Transverse colon (tissue), 4 donors: ENCODE measurements at regions of chr2 and their contacts with region 1.

Region 1: GRCh38 chr2:78766459-78766858 is 259.0 kb upstream of the REG3G start:
- DNase-seq: no peak
- H3K4me3 ChIP-seq: no peak overlapping the region
- H3K27ac ChIP-seq: no peak overlapping the region
- H3K4me1 ChIP-seq: no peaks in the 10 kb centered on the region
- H3K27me3 ChIP-seq: no peaks in the 10 kb centered on the region
- CTCF ChIP-seq: no peak
- EP300 ChIP-seq: no peak
- POLR2A ChIP-seq: no peak

Region 2: GRCh38 chr2:78686625-78687153 is 79.8 kb before region 1 on chr2:
- in situ Hi-C with region 1: no loop called
- intact Hi-C with region 1: no loop called
- DNase-seq: no peak
- H3K4me3 ChIP-seq: no peak overlapping the region
- H3K27ac ChIP-seq: no peak overlapping the region
- H3K4me1 ChIP-seq: no peaks in the 10 kb centered on the region
- H3K27me3 ChIP-seq: no peaks in the 10 kb centered on the region
- CTCF ChIP-seq: no peak
- EP300 ChIP-seq: no peak
- POLR2A ChIP-seq: no peak

Region 3: GRCh38 chr2:78780864-78781583 is 14.6 kb after region 1 on chr2:
- in situ Hi-C with region 1: no loop called
- intact Hi-C with region 1: loop called (anchors 1 kb)
- DNase-seq: no peak
- H3K4me3 ChIP-seq: no peak overlapping the region
- H3K27ac ChIP-seq: peak overlapping the region; percentile 35 to 77 (median 62)
- H3K4me1 ChIP-seq: peaks cover 0 to 4% (median under 1%) of the 10 kb centered on the region in 4 donors
- H3K27me3 ChIP-seq: no peaks in the 10 kb centered on the region
- CTCF ChIP-seq: no peak
- EP300 ChIP-seq: no peak
- POLR2A ChIP-seq: no peak

Region 4: GRCh38 chr2:78908973-78909372 is 142.5 kb after region 1 on chr2:
- in situ Hi-C with region 1: no loop called
- intact Hi-C with region 1: no loop called
- DNase-seq: no peak
- H3K4me3 ChIP-seq: no peak overlapping the region
- H3K27ac ChIP-seq: no peak overlapping the region
- H3K4me1 ChIP-seq: no peaks in the 10 kb centered on the region
- H3K27me3 ChIP-seq: no peaks in the 10 kb centered on the region
- CTCF ChIP-seq: no peak
- EP300 ChIP-seq: no peak
- POLR2A ChIP-seq: no peak